ENCODE measurements at regions of chr10 and their contacts with region 1.

Region 1: GRCh38 chr10:95656291-95657164 is at the start of gene ALDH18A1:
- DNase-seq: peak; percentile 93
- H3K4me3 ChIP-seq: peak within 1 kb of the TSS; percentile 73 to 93 (median 89)
- H3K27ac ChIP-seq: peak within 1 kb of the TSS; percentile 64
- H3K4me1 ChIP-seq: peaks cover 11% of the 10 kb centered on the region
- H3K27me3 ChIP-seq: no peaks in the 10 kb centered on the region
- CTCF ChIP-seq: no peak
- POLR2A ChIP-seq: peak; percentile 78
- total RNA-seq, gene ALDH18A1: 88.9 and 92.6 TPM in 2 replicates

Region 2: GRCh38 chr10:95864906-95865813 is 208.6 kb after region 1 on chr10:
- CTCF ChIA-PET with region 1: no interaction called
- POLR2A ChIA-PET with region 1: no interaction called
- dilution Hi-C with region 1: no loop called
- intact Hi-C with region 1: loop called (anchors 1 kb)
- DNase-seq: peak; percentile 69
- H3K4me3 ChIP-seq: no peak overlapping the region
- H3K27ac ChIP-seq: no peak overlapping the region
- H3K4me1 ChIP-seq: no peaks in the 10 kb centered on the region
- H3K27me3 ChIP-seq: no peaks in the 10 kb centered on the region
- CTCF ChIP-seq: peak; percentile 59 to 73
- POLR2A ChIP-seq: no peak

Measured in endothelial cell of umbilical vein (primary cell).